T-cell (primary cell): ENCODE measurements at regions of chr3 and their contacts with region 1.

Region 1: DNA sequence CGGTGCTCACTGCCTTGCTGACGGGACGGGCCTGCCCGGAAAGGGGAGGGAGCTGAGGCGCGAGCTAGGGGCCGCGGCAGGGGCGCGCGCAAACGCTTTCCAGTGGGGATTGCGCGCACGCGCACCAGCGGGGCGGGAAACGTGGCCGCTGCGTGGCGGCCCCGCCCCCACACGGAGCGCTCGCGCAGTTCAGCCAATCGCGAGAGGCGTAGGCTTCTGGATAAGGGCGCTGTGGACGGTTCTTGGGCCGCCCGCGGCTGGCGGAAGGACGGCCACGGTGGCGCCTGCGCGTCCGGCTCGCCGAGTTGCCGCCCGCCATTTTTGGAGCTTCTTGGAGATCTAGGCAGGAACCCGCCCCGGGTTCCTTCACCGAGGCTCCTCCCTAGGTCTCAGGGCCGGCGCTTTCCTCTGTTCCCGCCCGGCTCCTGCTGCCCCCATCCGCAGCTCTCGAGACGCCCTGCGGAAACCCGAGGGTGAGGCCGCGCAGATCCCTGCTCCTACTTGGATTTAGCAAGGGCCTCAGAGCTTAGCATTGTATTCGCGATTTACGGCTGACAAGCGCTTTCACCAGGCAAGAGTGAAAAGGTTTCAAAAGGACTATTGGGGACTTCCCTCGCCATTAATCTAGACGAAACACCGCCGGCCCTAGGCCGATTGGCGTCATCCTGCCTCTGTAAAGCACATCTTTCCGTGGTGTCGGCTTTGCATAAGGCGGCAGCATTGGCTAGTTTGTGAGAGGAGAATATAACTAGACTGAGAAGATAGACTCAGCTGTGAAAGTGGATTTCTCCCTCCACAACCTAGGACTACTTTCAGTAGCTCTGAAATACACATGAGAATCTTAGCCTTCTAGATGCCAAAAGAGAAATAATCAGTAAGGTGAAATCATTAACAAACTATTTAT is 496 bp upstream of the STAG1 start:
- DNase-seq: peak; percentile 94 to 99 (median 98)
- ATAC-seq: peak; percentile 82 to 88 (median 86)
- H3K4me3 ChIP-seq: peak overlapping the region; percentile 68 to 80
- H3K4me3 Mint-ChIP-seq: peak overlapping the region; percentile 90 to 93 (median 92)
- H3K27ac ChIP-seq: peak overlapping the region; percentile 96
- H3K27ac Mint-ChIP-seq: peak overlapping the region; percentile 95 to 96
- H3K4me1 ChIP-seq: peaks cover 17 to 32% of the 10 kb centered on the region in 2 experiments
- H3K4me1 Mint-ChIP-seq: peaks cover 41 to 49% (median 46%) of the 10 kb centered on the region in 3 donors
- H3K27me3 ChIP-seq: no peaks in the 10 kb centered on the region
- H3K27me3 Mint-ChIP-seq: no peaks in the 10 kb centered on the region

Region 2: GRCh38 chr3:136186344-136186743 is 566.3 kb before region 1 on chr3:
- CTCF ChIA-PET with region 1: interaction called in 1 of 2 experiments, 3 read pairs
- POLR2A ChIA-PET with region 1: interaction called in 1 of 2 experiments, 10 read pairs
- DNase-seq: peak in 11 of 35 experiments; percentile 5 to 42 (median 17)
- ATAC-seq: peak; percentile 47 to 81 (median 74)
- H3K4me3 ChIP-seq: no peak overlapping the region
- H3K4me3 Mint-ChIP-seq: peak overlapping the region; percentile 61 to 88 (median 67)
- H3K27ac ChIP-seq: no peak overlapping the region
- H3K27ac Mint-ChIP-seq: peak overlapping the region; percentile 72 to 80
- H3K4me1 ChIP-seq: peaks cover 32 to 71% of the 10 kb centered on the region in 2 experiments
- H3K4me1 Mint-ChIP-seq: peaks cover 93 to 96% (median 94%) of the 10 kb centered on the region in 3 donors
- H3K27me3 ChIP-seq: no peaks in the 10 kb centered on the region
- H3K27me3 Mint-ChIP-seq: no peaks in the 10 kb centered on the region

Region 3: GRCh38 chr3:136390574-136390973 is 362.1 kb before region 1 on chr3:
- CTCF ChIA-PET with region 1: interaction called, 5 to 37 read pairs
- POLR2A ChIA-PET with region 1: interaction called in 1 of 2 experiments, 4 read pairs
- DNase-seq: no peak
- ATAC-seq: no peak
- H3K4me3 ChIP-seq: no peak overlapping the region
- H3K4me3 Mint-ChIP-seq: no peak overlapping the region
- H3K27ac ChIP-seq: no peak overlapping the region
- H3K27ac Mint-ChIP-seq: no peak overlapping the region
- H3K4me1 ChIP-seq: no peaks in the 10 kb centered on the region
- H3K4me1 Mint-ChIP-seq: no peaks in the 10 kb centered on the region
- H3K27me3 ChIP-seq: no peaks in the 10 kb centered on the region
- H3K27me3 Mint-ChIP-seq: no peaks in the 10 kb centered on the region

Region 4: DNA sequence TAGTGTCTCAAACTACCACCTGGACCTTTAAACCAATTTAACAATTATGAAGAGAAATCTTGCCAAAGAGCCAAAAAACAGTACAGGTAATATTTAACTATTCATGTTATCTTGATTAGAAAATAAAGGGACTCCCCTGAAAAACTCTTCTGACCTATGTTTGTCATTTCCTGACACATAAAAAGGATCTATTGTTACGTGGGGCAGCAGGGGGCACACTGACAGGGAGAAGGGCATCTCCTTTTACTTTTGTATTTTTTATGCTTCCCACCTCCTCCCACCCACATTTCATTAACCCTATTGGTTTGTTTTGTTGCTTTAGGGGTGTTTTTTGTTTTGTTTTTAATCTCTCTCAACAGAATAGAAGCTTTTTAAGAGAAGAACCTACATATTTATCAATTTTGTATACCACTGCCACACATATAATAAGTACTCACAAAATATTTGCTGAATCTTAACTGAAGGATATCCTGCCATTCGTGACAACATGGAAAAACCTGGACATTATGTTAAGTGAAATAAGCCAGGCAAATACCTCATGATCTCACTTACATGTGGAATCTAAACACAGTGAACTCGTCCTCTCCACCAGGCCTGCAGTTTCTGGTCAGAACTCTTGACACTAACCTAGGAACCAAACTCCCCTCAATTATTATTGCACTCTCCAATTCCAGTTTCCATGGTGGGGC is 18.1 kb before region 1 on chr3:
- CTCF ChIA-PET with region 1: interaction called in 1 of 2 experiments, 24 read pairs
- POLR2A ChIA-PET with region 1: interaction called in 1 of 2 experiments, 3 read pairs
- DNase-seq: peak in 5 of 35 experiments; percentile 6 to 51 (median 14)
- ATAC-seq: peak in 1 of 4 experiments; percentile 53
- H3K4me3 ChIP-seq: no peak overlapping the region
- H3K4me3 Mint-ChIP-seq: peak overlapping the region in 1 of 3 donors; percentile 24
- H3K27ac ChIP-seq: no peak overlapping the region
- H3K27ac Mint-ChIP-seq: peak overlapping the region in 1 of 2 donors; percentile 56
- H3K4me1 ChIP-seq: peaks cover 22 to 29% of the 10 kb centered on the region in 2 experiments
- H3K4me1 Mint-ChIP-seq: peaks cover 62 to 65% (median 64%) of the 10 kb centered on the region in 3 donors
- H3K27me3 ChIP-seq: no peaks in the 10 kb centered on the region
- H3K27me3 Mint-ChIP-seq: no peaks in the 10 kb centered on the region

Region 5: GRCh38 chr3:136861890-136862616 is 109.4 kb after region 1 on chr3 and contains the start of gene NCK1:
- CTCF ChIA-PET with region 1: interaction called, 11 to 89 read pairs
- POLR2A ChIA-PET with region 1: interaction called, 8 to 34 read pairs
- DNase-seq: peak; percentile 95 to 100 (median 99)
- ATAC-seq: peak; percentile 94 to 97 (median 96)
- H3K4me3 ChIP-seq: peak within 1 kb of the TSS; percentile 84 to 95
- H3K4me3 Mint-ChIP-seq: peak within 1 kb of the TSS; percentile 89 to 94 (median 90)
- H3K27ac ChIP-seq: peak within 1 kb of the TSS; percentile 89
- H3K27ac Mint-ChIP-seq: peak within 1 kb of the TSS; percentile 97 to 98
- H3K4me1 ChIP-seq: peaks cover 14 to 31% of the 10 kb centered on the region in 2 experiments
- H3K4me1 Mint-ChIP-seq: peaks cover 39 to 67% (median 59%) of the 10 kb centered on the region in 3 donors
- H3K27me3 ChIP-seq: no peaks in the 10 kb centered on the region
- H3K27me3 Mint-ChIP-seq: no peaks in the 10 kb centered on the region
- total RNA-seq, gene NCK1: 46.9 to 65.3 (median 50.9) TPM

Region 6: GRCh38 chr3:137013955-137014688 is 261.4 kb after region 1 on chr3:
- CTCF ChIA-PET with region 1: interaction called, 12 to 71 read pairs
- POLR2A ChIA-PET with region 1: interaction called in 1 of 2 experiments, 4 read pairs
- DNase-seq: peak; percentile 43 to 91 (median 77)
- ATAC-seq: peak; percentile 81 to 91 (median 87)
- H3K4me3 ChIP-seq: peak overlapping the region; percentile 1 to 32
- H3K4me3 Mint-ChIP-seq: peak overlapping the region; percentile 67 to 80 (median 71)
- H3K27ac ChIP-seq: no peak overlapping the region
- H3K27ac Mint-ChIP-seq: no peak overlapping the region
- H3K4me1 ChIP-seq: peaks cover 0 to 9% of the 10 kb centered on the region in 2 experiments
- H3K4me1 Mint-ChIP-seq: peaks cover 7 to 11% (median 10%) of the 10 kb centered on the region in 3 donors
- H3K27me3 ChIP-seq: no peaks in the 10 kb centered on the region
- H3K27me3 Mint-ChIP-seq: peaks cover 2 to 3% of the 10 kb centered on the region in 2 donors